H1 (cell line): ENCODE measurements at regions of chr9 and their contacts with region 1.

Region 1: DNA sequence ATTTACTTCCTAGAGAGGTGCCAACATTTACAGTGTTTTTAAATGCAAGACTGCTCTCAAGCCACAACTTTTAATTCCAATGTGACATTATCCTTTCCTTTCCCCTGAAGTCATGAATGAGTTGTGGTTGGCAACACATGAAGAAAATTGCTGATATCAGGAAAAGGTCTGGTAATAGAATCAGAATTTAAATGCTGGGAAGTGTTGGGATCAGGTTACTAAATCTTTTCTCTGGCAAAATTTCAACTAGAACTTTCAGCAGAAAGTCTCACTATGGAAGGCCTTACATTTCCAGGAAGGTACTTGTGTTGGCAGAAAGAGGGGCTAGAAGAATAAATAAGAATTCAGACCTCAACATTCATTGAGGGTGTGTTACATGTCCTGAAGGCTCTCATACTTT is 10.6 kb upstream of the SLC44A1 start:
- DNase-seq: no peak
- H3K4me3 ChIP-seq: no peak overlapping the region
- H3K27ac ChIP-seq: no peak overlapping the region
- H3K4me1 ChIP-seq: peaks cover 0 to 4% (median 1%) of the 10 kb centered on the region in 4 experiments; a peak in 1 of 7 replicates
- H3K27me3 ChIP-seq: no peaks in the 10 kb centered on the region
- CTCF ChIP-seq: no peak
- EP300 ChIP-seq: no peak
- POLR2A ChIP-seq: no peak
- RAD21 ChIP-seq: no peak

Region 2: DNA sequence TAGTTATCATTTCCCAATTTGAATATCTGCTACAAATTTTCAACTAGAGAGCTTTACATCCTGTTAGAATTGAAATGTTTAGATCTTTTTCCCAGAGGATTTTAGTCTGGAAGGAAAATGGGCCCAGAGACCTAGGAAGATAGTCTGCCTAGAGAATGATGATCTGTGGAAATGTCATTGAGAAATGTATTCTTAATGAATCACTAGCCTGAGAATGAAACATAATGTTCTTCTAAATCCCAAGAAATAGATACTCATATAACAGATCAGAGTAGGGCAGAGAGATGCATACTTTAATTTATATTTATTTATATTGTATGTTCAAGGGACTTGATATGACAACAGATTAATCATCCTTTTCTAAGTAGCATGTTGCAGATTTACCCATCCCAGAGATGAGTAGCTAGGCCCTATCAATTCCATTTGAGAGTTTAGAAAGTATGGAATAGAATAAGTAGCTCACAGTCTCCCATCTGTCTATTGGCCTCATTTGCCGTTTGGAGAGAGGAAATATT is 14.5 kb before region 1 on chr9:
- CTCF ChIA-PET with region 1: interaction called, 15 read pairs
- POLR2A ChIA-PET with region 1: interaction called, 3 read pairs
- DNase-seq: no peak
- H3K4me3 ChIP-seq: no peak overlapping the region
- H3K27ac ChIP-seq: no peak overlapping the region
- H3K4me1 ChIP-seq: peaks cover 0 to 13% (median 4%) of the 10 kb centered on the region in 4 experiments; a peak in 2 of 7 replicates
- H3K27me3 ChIP-seq: no peaks in the 10 kb centered on the region; a peak in 1 of 7 replicates
- CTCF ChIP-seq: no peak
- EP300 ChIP-seq: no peak
- POLR2A ChIP-seq: no peak
- RAD21 ChIP-seq: no peak